ENCODE measurements at regions of chr5 and their contacts with region 1.

Region 1: DNA sequence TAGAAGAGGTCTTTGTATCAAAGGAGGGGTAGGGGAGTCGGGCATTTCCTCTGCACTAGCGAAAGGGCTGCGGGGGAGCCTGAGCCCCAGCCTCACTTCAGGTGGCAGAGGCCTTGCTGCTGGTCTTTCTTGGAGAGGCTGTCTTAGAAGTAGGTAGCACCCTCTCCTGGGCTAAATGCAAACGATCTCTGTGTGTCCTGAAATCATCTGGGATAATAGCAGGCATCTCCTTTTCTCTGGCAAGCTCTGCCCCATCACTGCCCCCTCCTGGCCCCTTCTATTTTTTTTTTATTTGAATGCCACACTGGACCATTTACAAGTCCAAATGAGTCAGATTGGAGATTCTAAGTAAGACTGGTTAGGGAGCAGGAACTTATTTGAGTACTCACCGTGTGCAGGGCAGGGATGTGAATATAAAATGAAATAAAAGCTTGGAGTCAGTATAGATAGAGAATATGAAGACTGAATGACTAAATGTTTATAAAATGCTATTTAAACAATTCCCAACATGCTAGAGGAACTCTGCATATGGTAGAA is 137.1 kb downstream of the FGF1 start:
- DNase-seq: peak; percentile 97
- H3K4me3 ChIP-seq: no peak overlapping the region
- H3K27ac ChIP-seq: peak overlapping the region; percentile 43
- H3K4me1 ChIP-seq: peaks cover 34% of the 10 kb centered on the region
- H3K27me3 ChIP-seq: no peaks in the 10 kb centered on the region
- CTCF ChIP-seq: peak; percentile 87 to 93
- POLR2A ChIP-seq: no peak

Region 2: DNA sequence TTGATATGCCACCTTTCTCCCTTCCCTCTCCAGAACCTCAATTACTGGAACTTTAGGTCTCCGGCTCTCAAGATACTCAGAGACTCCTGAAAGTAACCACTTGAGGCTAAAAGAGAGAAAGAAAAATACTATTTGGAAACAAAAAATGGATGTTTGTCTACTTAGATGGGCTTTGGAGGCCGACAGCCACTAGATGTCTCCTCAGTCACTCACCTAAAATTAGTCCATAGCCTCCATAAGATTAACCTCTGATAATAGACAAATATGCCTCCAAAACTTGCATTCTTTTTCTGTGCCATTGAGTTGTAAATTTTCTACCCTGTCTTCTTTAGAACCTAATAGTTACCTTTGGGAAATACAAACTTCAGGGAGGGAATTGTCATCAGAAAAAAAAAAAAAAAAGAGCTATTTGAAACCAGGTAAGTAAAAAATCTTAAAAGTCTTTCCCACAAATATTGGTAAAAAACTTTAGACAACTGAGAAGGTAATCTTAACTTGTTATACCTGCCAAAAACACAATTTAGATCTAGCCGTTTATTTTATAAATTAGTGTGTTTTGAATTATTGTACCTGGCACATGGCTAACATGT is 659.4 kb before region 1 on chr5:
- CTCF ChIA-PET with region 1: no interaction called
- POLR2A ChIA-PET with region 1: no interaction called
- dilution Hi-C with region 1: no loop called
- intact Hi-C with region 1: no loop called
- DNase-seq: peak; percentile 48
- H3K4me3 ChIP-seq: no peak overlapping the region
- H3K27ac ChIP-seq: no peak overlapping the region
- H3K4me1 ChIP-seq: no peaks in the 10 kb centered on the region
- H3K27me3 ChIP-seq: peaks cover 0 to 12% of the 10 kb centered on the region in 2 experiments
- CTCF ChIP-seq: peak; percentile 10 to 43
- POLR2A ChIP-seq: no peak

Region 3: DNA sequence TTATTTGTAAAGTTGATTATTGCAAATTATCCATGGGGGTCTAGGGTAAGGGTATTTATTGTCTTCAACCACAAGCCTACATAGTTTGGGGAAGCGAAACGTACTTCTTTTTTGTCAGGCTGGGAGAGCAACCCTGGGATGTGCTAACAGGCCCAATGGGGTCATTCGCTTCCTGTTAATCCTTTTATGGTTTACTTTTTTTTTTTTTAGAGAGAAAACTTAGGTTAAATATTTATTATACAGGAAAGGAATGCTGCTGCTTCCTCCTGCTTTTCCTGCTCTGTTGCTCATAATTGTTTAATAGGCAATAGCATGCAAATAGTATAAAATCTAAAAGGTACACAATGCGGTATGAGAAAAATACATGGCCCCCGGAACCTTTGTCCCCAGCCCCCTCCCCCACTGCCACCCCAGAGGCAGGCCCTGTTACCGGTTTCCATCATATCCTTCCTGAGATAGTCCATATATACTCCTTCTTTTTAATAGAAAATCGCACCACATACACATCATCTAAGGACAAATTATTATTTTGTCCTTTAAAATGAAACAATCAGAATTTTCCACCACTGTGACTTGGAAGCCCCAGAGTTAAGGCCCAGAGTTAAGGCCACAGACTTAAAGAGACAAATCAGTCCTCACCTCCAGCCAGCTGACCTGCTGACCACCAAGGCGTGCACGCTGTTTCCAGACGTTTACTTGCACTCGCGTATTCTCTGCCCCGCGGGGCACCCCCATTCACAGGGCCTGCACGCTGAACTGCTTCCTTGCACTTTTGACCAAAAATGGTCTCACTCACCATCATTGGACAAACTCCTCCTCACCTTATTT is 356.3 kb before region 1 on chr5:
- CTCF ChIA-PET with region 1: interaction called, 6 read pairs
- POLR2A ChIA-PET with region 1: no interaction called
- dilution Hi-C with region 1: no loop called
- intact Hi-C with region 1: loop called (anchors 2 kb)
- DNase-seq: peak; percentile 41
- H3K4me3 ChIP-seq: no peak overlapping the region
- H3K27ac ChIP-seq: peak overlapping the region; percentile 75
- H3K4me1 ChIP-seq: peaks cover 29% of the 10 kb centered on the region
- H3K27me3 ChIP-seq: no peaks in the 10 kb centered on the region
- CTCF ChIP-seq: no peak
- POLR2A ChIP-seq: no peak

Region 4: DNA sequence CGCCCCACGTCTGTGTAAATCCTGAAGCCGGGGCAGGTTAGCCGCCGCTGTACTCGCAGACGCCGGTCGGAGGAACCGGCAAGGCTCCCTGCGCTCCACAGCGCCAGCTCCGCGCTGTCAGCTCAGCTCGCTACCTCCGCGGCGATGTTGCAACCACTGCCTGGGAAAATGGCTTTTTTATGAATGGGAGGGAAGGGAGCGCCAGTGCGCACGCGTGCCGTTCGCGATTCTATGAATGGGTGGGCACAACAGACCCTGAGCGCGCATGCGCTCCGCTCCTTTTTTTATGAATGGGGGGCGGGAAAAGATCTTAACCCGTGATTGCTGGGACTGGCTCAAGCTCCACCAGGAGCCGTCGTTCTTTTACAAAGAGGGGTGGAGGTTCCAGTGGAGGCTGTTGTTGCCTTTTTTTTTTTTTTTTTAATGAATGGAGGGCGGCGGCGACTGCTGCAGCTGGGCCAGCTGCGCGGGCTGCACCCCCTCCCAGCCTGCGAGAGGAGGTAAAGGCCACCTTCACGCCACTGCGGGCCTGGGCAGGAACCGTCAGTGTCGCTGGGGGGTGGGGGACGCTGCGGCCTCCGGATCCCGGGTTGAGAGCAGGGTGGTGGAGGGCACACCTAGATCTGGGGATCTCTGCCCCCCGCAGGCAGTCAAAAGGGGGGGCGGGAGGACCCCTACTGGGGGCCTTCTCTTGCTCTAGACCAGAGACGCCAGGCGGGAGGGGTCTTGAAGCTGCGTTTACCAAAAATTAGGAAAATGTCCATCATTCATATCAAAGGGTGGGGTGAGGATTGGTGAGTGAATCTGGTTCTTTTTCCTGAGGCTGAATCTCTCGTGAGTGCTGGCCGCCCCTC is 223.7 kb before region 1 on chr5 and contains the start of gene SPRY4:
- CTCF ChIA-PET with region 1: interaction called, 128 read pairs
- POLR2A ChIA-PET with region 1: interaction called, 3 read pairs
- dilution Hi-C with region 1: no loop called
- intact Hi-C with region 1: loop called (anchors 1 kb)
- DNase-seq: peak; percentile 98
- H3K4me3 ChIP-seq: peak within 1 kb of the TSS; percentile 76 to 89 (median 81)
- H3K27ac ChIP-seq: peak within 1 kb of the TSS; percentile 88
- H3K4me1 ChIP-seq: peaks cover 48% of the 10 kb centered on the region
- H3K27me3 ChIP-seq: no peaks in the 10 kb centered on the region
- CTCF ChIP-seq: no peak
- POLR2A ChIP-seq: peak; percentile 97
- total RNA-seq, gene SPRY4: 33.9 and 49.5 TPM in 2 replicates

Region 5: DNA sequence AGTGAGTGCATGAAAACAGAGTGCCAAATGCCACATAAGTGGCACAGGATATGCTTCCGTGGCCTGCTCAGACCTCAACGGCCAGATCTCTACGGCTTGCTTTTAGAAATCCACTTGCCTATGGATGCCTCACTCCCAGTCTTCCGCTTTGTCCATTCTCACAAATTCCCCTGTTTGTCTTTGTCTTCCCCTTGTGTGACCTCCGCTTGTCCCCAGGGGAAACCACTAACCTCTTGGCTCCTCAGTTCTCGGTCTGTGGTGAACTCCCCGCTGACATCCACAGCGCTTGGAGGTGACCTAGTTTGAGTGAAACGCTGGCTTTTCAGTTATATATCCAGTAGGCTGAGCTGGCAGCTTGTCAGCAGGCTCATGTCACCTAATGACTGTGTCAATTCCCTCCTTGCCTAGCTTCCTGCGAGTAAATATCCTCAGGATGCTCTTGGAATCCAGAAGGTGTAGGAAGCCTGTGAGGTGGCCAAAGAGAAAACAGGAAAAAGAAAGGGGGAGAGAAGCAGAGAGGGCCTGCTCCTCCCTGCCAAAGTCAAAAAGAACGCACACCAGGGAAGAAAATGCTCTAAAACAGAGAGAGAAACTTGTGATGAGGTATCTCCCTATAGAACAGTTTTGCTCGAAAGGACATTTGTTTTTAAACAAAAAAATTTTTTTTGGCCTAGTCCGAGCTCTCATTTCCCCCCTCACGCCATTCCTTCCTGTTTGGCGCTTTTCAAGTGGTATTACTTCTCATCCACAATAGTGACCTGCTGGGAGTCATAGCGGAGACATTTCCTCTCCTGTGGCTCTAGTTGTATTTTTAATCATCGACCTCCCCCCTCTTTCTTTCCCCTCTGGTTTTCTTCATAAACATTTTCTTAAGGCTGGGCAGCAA is 122.4 kb before region 1 on chr5:
- CTCF ChIA-PET with region 1: interaction called, 10 read pairs
- POLR2A ChIA-PET with region 1: no interaction called
- dilution Hi-C with region 1: no loop called
- intact Hi-C with region 1: loop called (anchors 1 kb)
- DNase-seq: peak; percentile 85
- H3K4me3 ChIP-seq: peak overlapping the region in 1 of 3 experiments; percentile 38
- H3K27ac ChIP-seq: peak overlapping the region; percentile 70
- H3K4me1 ChIP-seq: peaks cover 44% of the 10 kb centered on the region
- H3K27me3 ChIP-seq: no peaks in the 10 kb centered on the region
- CTCF ChIP-seq: no peak
- POLR2A ChIP-seq: peak; percentile 64

Region 6: GRCh38 chr5:142472300-142472951 is 76.4 kb before region 1 on chr5:
- CTCF ChIA-PET with region 1: no interaction called
- POLR2A ChIA-PET with region 1: no interaction called
- dilution Hi-C with region 1: no loop called
- intact Hi-C with region 1: loop called (anchors 1 kb)
- DNase-seq: peak; percentile 83
- H3K4me3 ChIP-seq: no peak overlapping the region
- H3K27ac ChIP-seq: peak overlapping the region; percentile 82
- H3K4me1 ChIP-seq: peaks cover 16% of the 10 kb centered on the region
- H3K27me3 ChIP-seq: no peaks in the 10 kb centered on the region
- CTCF ChIP-seq: no peak
- POLR2A ChIP-seq: peak; percentile 30

Region 7: GRCh38 chr5:142977363-142978051 is 428.7 kb after region 1 on chr5:
- CTCF ChIA-PET with region 1: no interaction called
- POLR2A ChIA-PET with region 1: no interaction called
- dilution Hi-C with region 1: no loop called
- intact Hi-C with region 1: no loop called
- DNase-seq: peak; percentile 48
- H3K4me3 ChIP-seq: no peak overlapping the region
- H3K27ac ChIP-seq: peak overlapping the region; percentile 58
- H3K4me1 ChIP-seq: peaks cover 54% of the 10 kb centered on the region
- H3K27me3 ChIP-seq: no peaks in the 10 kb centered on the region
- CTCF ChIP-seq: no peak
- POLR2A ChIP-seq: no peak